ENCODE measurements at regions of chr10 and their contacts with region 1.

Region 1: DNA sequence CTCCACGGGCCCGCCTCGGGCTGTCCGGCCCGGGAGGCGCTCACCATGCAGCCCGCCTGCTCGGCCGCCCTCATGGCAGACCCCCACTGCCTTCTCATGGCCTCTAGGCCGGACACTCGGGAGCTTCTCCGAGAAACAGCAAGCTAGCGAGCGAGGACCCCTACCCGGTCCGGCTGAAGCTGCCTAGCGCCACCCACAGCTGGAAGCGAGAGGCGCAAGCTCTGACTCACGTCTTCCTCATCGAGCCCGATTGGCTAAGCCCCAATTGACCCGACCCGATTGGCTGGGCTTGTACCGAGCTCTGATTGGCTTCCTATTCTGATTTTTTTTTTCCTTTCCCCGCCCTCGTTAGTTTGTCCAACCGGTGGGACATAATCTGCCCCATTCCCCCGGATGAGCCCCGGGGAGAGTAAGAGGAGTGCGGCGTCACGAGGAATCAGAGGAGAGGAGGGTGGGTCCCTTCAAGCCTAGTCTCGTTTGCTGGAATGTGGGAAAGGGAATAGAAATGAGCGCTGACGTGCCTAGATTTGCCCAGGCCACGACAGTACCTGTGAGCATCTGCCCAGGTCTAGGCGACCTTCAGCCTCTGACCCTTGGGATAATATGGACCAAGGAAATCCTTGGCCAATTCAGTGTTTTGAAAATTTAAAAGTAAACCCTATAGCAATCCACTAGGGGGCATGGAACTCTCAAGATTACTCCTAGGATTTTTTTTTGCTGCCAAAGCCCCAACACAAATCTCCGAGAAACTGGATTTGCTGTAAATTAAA is at the start of gene TYSND1:
- DNase-seq: peak; percentile 98
- ATAC-seq: peak; percentile 93
- H3K4me3 Mint-ChIP-seq: peak within 1 kb of the TSS; percentile 78
- H3K27ac Mint-ChIP-seq: peak within 1 kb of the TSS; percentile 96
- H3K4me1 Mint-ChIP-seq: peaks cover 16% of the 10 kb centered on the region
- H3K27me3 Mint-ChIP-seq: no peaks in the 10 kb centered on the region
- CTCF ChIP-seq: peak; percentile 17; the same call in 1 of the 2 replicates
- total RNA-seq, gene TYSND1: 18.9 to 21.3 TPM (median 20.7 TPM) in 3 replicates

Region 2: DNA sequence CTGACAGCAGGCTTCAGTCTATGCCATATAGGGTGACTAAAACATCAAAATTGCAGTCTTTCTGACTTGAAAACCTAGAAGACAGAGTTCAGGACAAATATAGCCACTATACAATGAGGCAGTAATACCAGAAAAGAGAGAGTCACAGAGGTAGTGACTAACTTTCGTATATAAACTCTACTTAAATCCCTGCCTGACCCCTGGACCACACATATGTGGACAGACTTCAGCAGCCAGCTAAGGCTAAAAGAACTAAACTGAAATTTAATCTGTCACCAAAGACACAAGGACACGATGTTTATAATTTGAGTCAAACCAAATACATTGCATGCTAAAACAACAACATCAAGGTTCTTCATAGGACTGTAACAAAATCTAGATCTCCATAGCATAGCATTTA is 158.6 kb before region 1 on chr10:
- CTCF ChIA-PET with region 1: no interaction called
- POLR2A ChIA-PET with region 1: no interaction called
- DNase-seq: no peak
- ATAC-seq: no peak
- H3K4me3 Mint-ChIP-seq: no peak overlapping the region
- H3K27ac Mint-ChIP-seq: no peak overlapping the region
- H3K4me1 Mint-ChIP-seq: no peaks in the 10 kb centered on the region
- H3K27me3 Mint-ChIP-seq: peaks cover 20% of the 10 kb centered on the region
- CTCF ChIP-seq: no peak

Region 3: DNA sequence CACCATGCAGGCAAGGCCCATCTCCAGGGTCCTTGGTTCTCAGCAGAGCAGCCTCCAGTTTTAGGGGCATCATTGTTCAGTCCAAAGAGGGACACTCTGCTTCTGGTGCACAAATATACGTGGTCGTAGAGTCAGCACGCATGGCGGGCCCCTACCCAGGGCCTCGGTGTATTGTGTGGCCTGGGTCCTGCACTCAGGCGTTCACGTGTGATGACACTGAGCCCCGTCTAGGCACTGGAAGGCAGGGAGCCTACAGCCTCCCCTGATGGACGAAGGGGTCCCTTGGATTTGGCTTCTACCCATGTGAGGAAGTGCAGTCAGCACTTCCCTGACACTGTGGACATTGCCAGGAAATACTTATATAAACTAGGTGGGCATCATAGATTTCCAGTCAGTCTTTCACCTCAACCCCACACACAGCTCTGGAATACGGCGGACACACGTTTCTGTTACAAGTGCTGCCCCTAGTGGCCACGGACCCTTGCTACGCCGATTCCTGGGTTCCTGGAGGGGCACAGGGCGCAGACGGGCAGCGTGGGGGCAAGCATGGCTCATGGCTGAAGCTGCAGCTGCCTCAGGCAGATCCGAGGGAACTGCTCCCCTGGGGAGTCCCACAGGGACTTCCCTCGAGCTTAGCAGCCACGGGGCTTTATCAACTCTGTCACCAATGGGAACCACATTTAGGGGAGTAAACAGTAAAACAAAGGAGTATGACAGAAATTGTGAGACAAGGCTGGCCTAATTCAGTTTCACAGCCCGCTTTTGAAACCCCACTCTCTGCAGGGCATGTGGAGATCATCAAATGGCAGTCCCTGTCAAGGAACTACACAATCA is 39.5 kb before region 1 on chr10:
- CTCF ChIA-PET with region 1: interaction called, 24 read pairs
- POLR2A ChIA-PET with region 1: no interaction called
- DNase-seq: peak; percentile 85
- ATAC-seq: peak; percentile 99
- H3K4me3 Mint-ChIP-seq: no peak overlapping the region
- H3K27ac Mint-ChIP-seq: no peak overlapping the region
- H3K4me1 Mint-ChIP-seq: peaks cover 11% of the 10 kb centered on the region
- H3K27me3 Mint-ChIP-seq: no peaks in the 10 kb centered on the region
- CTCF ChIP-seq: peak; percentile 70

Region 4: DNA sequence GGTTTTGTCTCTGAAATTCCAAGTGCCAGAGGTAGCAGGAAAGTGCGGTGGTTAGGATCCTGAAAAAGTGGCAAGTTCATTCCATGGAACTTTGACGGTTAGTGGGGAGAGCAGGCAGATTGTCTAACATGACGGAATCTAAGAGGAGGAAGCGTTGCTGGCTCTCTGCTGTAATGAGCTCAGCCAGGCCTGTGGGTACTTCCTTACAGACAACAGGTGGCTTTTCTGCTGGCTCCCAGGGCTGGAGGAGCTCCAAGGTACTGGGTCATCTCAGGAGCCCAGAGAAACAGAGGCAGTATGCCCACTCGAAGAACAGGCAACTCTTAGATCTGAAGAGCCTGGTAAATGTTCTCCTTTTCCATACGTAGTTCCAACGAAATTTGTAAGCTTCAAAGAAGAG is 11.0 kb before region 1 on chr10:
- CTCF ChIA-PET with region 1: interaction called, 18 read pairs
- POLR2A ChIA-PET with region 1: interaction called, 5 read pairs
- DNase-seq: no peak
- ATAC-seq: no peak
- H3K4me3 Mint-ChIP-seq: no peak overlapping the region
- H3K27ac Mint-ChIP-seq: no peak overlapping the region
- H3K4me1 Mint-ChIP-seq: peaks cover 15% of the 10 kb centered on the region
- H3K27me3 Mint-ChIP-seq: peaks cover 24% of the 10 kb centered on the region
- CTCF ChIP-seq: no peak

Region 5: DNA sequence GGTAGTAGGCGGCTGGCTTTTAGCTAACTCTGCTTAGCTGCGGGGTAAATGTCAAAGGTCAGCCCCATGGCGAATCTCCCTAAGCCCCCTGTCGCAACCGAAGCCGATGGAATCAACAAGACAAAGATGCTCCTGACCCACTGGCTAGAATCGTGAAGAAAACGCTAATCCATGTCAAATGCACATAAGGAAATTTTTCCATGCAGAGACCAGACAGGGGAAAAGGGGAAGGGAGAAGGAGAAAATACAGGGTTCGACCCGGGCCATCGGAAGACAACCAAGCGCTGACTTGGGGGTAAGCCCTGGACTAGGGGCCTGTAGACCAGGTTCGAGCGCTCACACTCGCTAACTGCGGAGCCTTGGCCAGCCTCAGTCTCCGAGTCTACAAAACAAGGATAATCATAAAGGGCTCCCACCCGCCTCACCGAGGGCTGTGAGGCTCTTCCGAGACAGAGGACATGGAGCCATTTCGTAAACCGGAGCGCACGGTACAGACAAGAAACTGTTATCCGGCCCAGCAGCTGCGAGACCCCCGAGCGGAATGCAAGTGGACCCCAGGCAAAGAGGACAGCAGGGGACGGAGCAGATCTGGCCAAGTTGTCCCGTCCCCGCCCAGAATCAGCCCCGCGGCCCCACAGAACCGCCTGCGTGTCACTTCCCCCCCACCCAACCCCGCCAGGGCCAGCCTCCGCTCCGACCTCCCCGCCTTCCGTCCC is 23.1 kb after region 1 on chr10:
- CTCF ChIA-PET with region 1: interaction called, 24 read pairs
- POLR2A ChIA-PET with region 1: interaction called, 19 read pairs
- DNase-seq: no peak
- ATAC-seq: no peak; the same call in 1 of the 2 replicates
- H3K4me3 Mint-ChIP-seq: peak overlapping the region; percentile 94
- H3K27ac Mint-ChIP-seq: peak overlapping the region; percentile 87
- H3K4me1 Mint-ChIP-seq: peaks cover 17% of the 10 kb centered on the region
- H3K27me3 Mint-ChIP-seq: no peaks in the 10 kb centered on the region; the same call in 1 of the 2 replicates
- CTCF ChIP-seq: no peak